A549 (cell line): ENCODE measurements at regions of chr16 and their contacts with region 1.

Region 1: DNA sequence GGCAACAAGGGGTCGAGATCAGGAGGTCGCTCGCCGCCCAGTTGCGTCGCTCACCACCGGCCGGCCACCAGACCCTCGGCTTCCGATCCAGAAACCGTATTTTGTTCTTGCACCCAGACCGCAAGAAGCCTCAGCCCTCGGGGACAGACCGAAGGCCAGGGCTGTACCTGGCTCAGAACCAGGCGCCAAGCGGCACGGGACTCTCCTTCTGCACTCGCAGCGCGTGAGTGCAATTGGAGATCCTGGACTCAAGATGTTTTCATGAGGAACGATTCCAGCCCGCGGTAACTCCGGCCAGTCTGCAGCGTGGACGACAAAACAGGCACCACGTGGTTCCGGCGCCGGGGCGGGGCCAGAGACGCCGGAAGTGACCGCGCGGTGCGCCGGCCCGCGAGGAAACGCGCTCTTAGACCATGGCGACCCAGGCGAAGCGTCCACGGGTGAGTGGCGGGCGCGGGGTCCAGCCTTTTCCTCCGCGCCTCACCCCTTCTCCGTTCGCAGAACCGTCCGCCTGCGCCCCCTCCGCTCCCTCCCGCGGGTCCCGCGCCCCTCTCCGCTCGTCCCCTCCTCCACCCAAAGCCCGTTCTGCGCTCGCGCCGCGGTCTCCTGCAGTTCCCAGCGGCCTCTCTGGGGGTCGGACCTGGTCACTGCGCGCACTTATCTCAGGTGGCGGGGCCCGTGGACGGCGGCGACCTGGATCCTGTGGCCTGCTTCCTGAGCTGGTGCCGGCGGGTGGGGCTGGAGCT is at the start of gene SETD6:
- DNase-seq: peak; percentile 57 to 86
- ATAC-seq: peak; percentile 73 to 86
- H3K4me3 ChIP-seq: peak within 1 kb of the TSS; percentile 85
- H3K27ac ChIP-seq: peak within 1 kb of the TSS; percentile 87 to 94
- H3K4me1 ChIP-seq: peaks cover 13% of the 10 kb centered on the region; the same call in 2 of the 3 replicates
- CTCF ChIP-seq: no peak
- EP300 ChIP-seq: no peak
- POLR2A ChIP-seq: peak; percentile 67
- RAD21 ChIP-seq: no peak
- polyA plus RNA-seq, gene SETD6: 16.5 and 19.2 TPM in 2 replicates

Region 2: GRCh38 chr16:58481931-58482330 is 33.4 kb before region 1 on chr16:
- CTCF ChIA-PET with region 1: no interaction called
- POLR2A ChIA-PET with region 1: no interaction called
- DNase-seq: no peak
- ATAC-seq: no peak
- H3K4me3 ChIP-seq: no peak overlapping the region
- H3K27ac ChIP-seq: no peak overlapping the region
- H3K4me1 ChIP-seq: no peaks in the 10 kb centered on the region
- CTCF ChIP-seq: no peak
- EP300 ChIP-seq: no peak
- POLR2A ChIP-seq: no peak
- RAD21 ChIP-seq: no peak

Region 3: DNA sequence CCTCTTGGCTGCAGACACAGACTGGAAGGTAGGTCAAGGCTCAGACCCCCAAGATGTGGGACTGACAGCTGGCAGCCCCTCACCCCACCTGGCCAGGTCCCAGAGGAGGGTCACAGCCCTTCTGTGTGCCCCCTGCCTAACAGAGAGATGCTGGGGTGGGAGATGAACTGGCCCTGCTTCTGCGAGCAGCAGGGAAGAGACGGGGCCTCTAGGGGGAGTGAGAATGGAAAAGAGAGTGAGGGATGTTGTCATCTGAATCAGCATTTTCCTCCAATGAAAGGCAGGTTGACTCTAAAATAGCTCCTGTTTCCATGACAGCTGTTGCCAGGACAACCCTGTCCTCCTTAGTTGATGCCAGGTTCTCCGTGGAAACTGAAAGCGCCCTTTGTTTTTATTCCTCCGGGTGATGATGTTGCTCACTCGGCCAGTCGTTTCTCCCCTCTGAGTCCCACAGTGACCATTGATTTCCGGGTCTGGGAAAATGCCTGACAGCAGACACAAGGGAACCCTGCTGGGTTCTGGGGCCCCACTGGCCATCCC is 20.2 kb before region 1 on chr16:
- CTCF ChIA-PET with region 1: interaction called, 71 read pairs
- POLR2A ChIA-PET with region 1: no interaction called
- DNase-seq: peak; percentile 92 to 93
- ATAC-seq: peak; percentile 52 to 73
- H3K4me3 ChIP-seq: no peak overlapping the region
- H3K27ac ChIP-seq: 0 out of 6 replicates have a peak overlapping the region, but pooled peaks of 1 of the 2 experiments have one; percentile 36
- H3K4me1 ChIP-seq: no peaks in the 10 kb centered on the region; the same call in 2 of the 3 replicates
- CTCF ChIP-seq: peak; percentile 52; the same call in 2 of the 3 replicates
- EP300 ChIP-seq: no peak
- POLR2A ChIP-seq: no peak
- RAD21 ChIP-seq: peak in 1 of 2 experiments; percentile 42; a peak in 2 of 5 replicates

Region 4: GRCh38 chr16:58652461-58653140 is 137.3 kb after region 1 on chr16:
- CTCF ChIA-PET with region 1: interaction called, 110 read pairs
- POLR2A ChIA-PET with region 1: no interaction called
- DNase-seq: peak in 1 of 2 experiments; percentile 35
- ATAC-seq: peak; percentile 64 to 76; a peak in 4 of 6 replicates
- H3K4me3 ChIP-seq: no peak overlapping the region
- H3K27ac ChIP-seq: no peak overlapping the region
- H3K4me1 ChIP-seq: 0 out of 3 replicates have a peak, but pooled peaks cover 3% of the 10 kb centered on the region
- CTCF ChIP-seq: no peak
- EP300 ChIP-seq: no peak
- POLR2A ChIP-seq: no peak
- RAD21 ChIP-seq: no peak